Mammary epithelial cell (primary cell): ENCODE measurements at regions of chr16 and their contacts with region 1.

Region 1: GRCh38 chr16:54616610-54617009 is 314.1 kb upstream of the IRX5 start:
- DNase-seq: no peak
- H3K4me3 ChIP-seq: no peak overlapping the region
- H3K27ac ChIP-seq: no peak overlapping the region
- H3K4me1 ChIP-seq: no peaks in the 10 kb centered on the region
- H3K27me3 ChIP-seq: peaks cover 3% of the 10 kb centered on the region
- CTCF ChIP-seq: no peak

Region 2: GRCh38 chr16:54546521-54546920 is 70.1 kb before region 1 on chr16:
- CTCF ChIA-PET with region 1: no interaction called
- dilution Hi-C with region 1: loop called (anchors 5 kb)
- in situ Hi-C with region 1: no loop called
- intact Hi-C with region 1: no loop called
- DNase-seq: no peak
- H3K4me3 ChIP-seq: no peak overlapping the region
- H3K27ac ChIP-seq: no peak overlapping the region
- H3K4me1 ChIP-seq: no peaks in the 10 kb centered on the region
- H3K27me3 ChIP-seq: peaks cover 3% of the 10 kb centered on the region
- CTCF ChIP-seq: no peak